HCT116 (cell line): ENCODE measurements at regions of chr2 and their contacts with region 1.

Region 1: DNA sequence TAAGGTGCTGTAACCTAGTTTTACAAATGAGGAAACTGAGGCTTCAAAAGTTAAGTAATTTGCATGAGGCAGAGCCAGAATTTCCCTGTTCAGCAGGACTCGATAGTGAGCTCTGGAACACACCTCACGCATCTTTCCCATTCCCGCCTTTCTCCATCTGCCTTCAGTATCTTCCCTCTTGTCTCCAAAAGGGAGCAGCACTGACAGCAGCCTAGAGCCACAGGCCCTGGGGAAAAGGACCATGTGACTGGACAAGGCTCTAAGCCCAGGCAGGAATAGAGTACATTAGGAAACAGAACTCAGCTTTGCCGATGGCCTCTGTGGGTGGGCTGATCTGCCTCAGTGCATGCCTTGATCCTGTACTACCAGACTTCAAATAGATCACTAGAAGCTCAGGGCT is 21.5 kb downstream of the GPR155 start:
- DNase-seq: no peak
- ATAC-seq: peak; percentile 61
- H3K4me3 ChIP-seq: no peak overlapping the region
- H3K27ac ChIP-seq: no peak overlapping the region
- H3K4me1 ChIP-seq: no peaks in the 10 kb centered on the region
- H3K27me3 ChIP-seq: no peaks in the 10 kb centered on the region
- CTCF ChIP-seq: 0 out of 6 replicates have a peak, but pooled peaks of 1 of the 3 experiments have one; percentile 4
- POLR2A ChIP-seq: no peak
- RAD21 ChIP-seq: no peak

Region 2: DNA sequence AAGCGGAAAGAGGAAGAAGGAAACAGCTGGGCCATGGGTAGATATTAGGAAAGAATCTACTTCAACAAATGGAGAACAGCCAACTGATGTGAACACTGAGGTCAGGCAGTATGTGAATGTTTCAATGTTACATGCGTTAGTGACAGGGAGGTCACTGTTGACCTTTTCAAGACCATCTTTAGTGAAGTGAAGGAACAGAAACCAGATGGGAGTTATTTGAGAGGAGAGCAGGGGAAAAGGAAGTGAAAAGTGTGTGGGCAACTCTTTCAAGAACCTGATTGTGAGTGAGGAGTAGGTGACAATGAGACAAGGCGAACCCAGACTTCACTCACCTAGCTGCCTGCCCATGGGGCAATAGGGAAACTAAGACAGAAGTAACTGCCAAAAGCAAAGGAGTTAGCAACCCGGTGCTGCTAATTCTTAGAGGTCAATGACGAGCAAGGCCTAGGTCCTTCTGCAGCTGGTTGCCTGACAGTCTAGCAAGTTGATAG is 567.1 kb before region 1 on chr2:
- CTCF ChIA-PET with region 1: no interaction called
- POLR2A ChIA-PET with region 1: no interaction called
- RAD21 ChIA-PET with region 1: no interaction called
- intact Hi-C with region 1: no loop called
- DNase-seq: no peak
- ATAC-seq: no peak
- H3K4me3 ChIP-seq: no peak overlapping the region
- H3K27ac ChIP-seq: no peak overlapping the region
- H3K4me1 ChIP-seq: no peaks in the 10 kb centered on the region
- H3K27me3 ChIP-seq: no peaks in the 10 kb centered on the region
- CTCF ChIP-seq: no peak
- POLR2A ChIP-seq: no peak
- RAD21 ChIP-seq: no peak

Region 3: DNA sequence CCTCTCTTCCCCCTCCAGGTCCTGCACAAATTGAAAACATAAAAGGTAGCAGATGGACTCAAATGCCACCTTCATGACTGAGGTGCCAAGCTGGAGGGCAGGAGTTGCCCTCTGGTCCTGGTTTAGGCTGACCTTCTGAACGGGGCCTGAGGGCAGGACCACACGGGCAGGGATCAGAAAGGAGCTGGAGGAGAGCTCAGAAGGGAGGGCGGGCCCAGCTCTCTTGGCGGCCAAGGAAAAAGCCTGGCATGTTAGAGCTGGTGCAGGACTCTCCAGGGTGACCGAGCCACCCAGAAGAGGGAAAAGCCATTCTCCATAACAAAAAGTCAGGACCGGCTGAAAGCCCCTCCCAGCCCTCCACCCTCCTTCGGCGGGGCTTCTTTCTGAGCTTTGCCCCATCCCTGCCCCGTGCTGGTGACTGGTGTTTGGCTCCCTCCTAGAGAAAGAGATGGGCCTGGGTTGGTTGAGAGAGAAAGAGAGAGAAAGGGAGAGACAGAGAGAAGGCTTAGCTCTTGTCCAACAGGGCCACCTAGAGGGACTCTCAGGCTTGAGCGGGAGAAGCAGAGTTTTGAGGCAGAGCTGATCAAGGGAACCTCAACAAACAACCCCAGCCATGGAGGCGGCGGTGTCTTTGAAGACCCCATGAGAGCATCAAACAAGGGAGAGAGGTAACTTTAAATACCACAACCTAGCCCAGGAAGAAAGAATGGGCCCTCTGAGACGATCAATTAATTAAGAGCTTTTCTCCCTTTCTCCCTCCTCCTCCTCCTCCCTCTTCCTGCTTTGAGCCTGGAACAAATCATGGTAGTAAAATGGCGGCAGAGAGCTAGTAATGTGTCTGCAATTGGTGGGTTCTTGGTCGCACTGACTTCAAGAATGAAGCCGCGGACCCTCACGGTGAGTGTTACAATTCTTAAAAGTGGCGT is 81.5 kb after region 1 on chr2:
- CTCF ChIA-PET with region 1: interaction called, 76 read pairs
- POLR2A ChIA-PET with region 1: no interaction called
- RAD21 ChIA-PET with region 1: interaction called, 10 to 11 read pairs
- intact Hi-C with region 1: loop called (anchors 1 kb)
- DNase-seq: peak; percentile 29
- ATAC-seq: peak; percentile 89
- H3K4me3 ChIP-seq: no peak overlapping the region
- H3K27ac ChIP-seq: no peak overlapping the region
- H3K4me1 ChIP-seq: no peaks in the 10 kb centered on the region
- H3K27me3 ChIP-seq: no peaks in the 10 kb centered on the region
- CTCF ChIP-seq: peak; percentile 47 to 60 (median 58); a peak in 5 of 6 replicates
- POLR2A ChIP-seq: no peak
- RAD21 ChIP-seq: peak; percentile 74

Region 4: DNA sequence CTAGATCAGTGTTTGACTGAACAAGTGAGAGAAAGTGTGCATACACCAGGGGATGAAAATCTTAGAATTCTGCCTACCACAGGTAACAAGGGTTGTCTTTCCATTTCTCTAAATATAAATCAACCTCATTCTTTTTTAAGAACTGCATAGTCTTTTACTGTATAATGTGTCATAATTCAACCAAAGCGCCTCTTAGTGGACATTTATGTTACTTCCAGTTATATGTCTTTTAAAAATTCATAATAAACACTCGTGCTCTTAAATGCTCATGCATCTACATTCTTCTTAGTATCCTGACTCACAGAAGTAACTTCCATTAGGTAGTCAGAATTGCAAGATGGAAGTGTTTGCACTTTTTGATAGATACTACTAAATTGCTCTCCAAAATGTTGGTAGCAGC is 222.8 kb after region 1 on chr2:
- CTCF ChIA-PET with region 1: interaction called, 46 read pairs
- POLR2A ChIA-PET with region 1: no interaction called
- RAD21 ChIA-PET with region 1: interaction called, 3 to 10 read pairs
- intact Hi-C with region 1: loop called (anchors 1 kb)
- DNase-seq: peak; percentile 8
- ATAC-seq: peak; percentile 65
- H3K4me3 ChIP-seq: no peak overlapping the region
- H3K27ac ChIP-seq: no peak overlapping the region
- H3K4me1 ChIP-seq: no peaks in the 10 kb centered on the region
- H3K27me3 ChIP-seq: 0 out of 2 replicates have a peak, but pooled peaks cover 4% of the 10 kb centered on the region
- CTCF ChIP-seq: peak; percentile 25 to 61 (median 55); a peak in 3 of 6 replicates
- POLR2A ChIP-seq: no peak
- RAD21 ChIP-seq: peak; percentile 48

Region 5: DNA sequence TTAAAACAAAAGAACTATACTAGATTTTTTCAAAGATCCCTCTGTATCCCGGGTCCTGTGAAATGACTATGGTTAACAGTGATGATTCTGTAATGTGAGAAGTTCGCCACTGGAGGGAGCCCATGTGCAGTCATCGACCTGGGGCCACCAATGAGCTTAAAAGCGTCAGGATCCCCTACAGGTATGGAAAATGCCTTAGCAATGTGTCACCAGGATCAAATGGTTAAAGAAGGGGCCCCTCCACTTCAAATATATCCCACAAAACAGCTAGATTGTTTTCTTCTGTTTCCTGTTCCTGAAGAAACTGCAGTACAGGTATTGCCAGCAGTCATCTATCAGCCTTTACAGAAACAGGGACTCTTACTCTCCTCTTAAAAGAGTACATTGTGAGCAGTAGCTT is 283.6 kb after region 1 on chr2:
- CTCF ChIA-PET with region 1: interaction called, 10 read pairs
- POLR2A ChIA-PET with region 1: no interaction called
- RAD21 ChIA-PET with region 1: no interaction called
- intact Hi-C with region 1: no loop called
- DNase-seq: peak; percentile 66
- ATAC-seq: peak; percentile 99
- H3K4me3 ChIP-seq: no peak overlapping the region
- H3K27ac ChIP-seq: no peak overlapping the region
- H3K4me1 ChIP-seq: peaks cover 5 to 7% of the 10 kb centered on the region in 2 experiments
- H3K27me3 ChIP-seq: no peaks in the 10 kb centered on the region
- CTCF ChIP-seq: peak; percentile 72 to 83 (median 77)
- POLR2A ChIP-seq: no peak
- RAD21 ChIP-seq: peak; percentile 79